ENCODE measurements at regions of chr15 and their contacts with region 1.

Region 1: DNA sequence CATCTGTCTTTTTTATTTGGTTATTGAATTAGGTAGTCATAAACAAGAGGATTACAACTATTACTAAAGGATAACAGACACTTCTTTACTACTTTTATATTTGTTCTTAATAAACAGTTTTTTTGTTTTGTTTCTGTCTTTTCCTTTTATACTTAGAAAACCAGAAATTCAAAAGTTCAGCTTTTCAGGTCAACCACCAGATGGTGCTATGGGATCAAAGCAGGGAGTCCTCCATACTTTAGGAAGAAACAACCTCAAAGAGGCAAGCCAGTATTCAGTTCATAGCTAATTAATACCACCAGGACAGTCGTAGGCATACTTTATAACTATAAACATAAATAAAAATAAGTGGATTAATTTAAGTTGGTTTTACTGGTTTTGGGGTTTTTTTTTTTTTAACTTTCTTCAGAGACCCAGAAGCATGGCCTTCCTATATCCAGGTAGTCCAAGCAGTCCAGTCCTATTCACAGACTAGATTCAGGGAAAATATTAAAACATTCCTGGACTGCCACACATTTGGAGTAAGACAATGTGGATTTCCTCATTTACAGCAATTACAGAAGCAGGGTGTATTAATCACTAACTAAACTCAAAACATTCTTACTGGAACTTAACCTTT is 16.0 kb upstream of the EID1 start:
- DNase-seq: no peak
- ATAC-seq: peak; percentile 87
- H3K4me3 ChIP-seq: no peak overlapping the region
- H3K27ac ChIP-seq: no peak overlapping the region
- H3K4me1 ChIP-seq: no peaks in the 10 kb centered on the region
- H3K27me3 ChIP-seq: no peaks in the 10 kb centered on the region; a peak in 1 of 4 replicates
- CTCF ChIP-seq: peak; percentile 67 to 92 (median 68); a peak in 5 of 6 replicates
- EP300 ChIP-seq: no peak
- POLR2A ChIP-seq: no peak
- RAD21 ChIP-seq: peak; percentile 99

Region 2: GRCh38 chr15:48888836-48889235 is 26.9 kb after region 1 on chr15:
- CTCF ChIA-PET with region 1: interaction called, 10 read pairs
- POLR2A ChIA-PET with region 1: no interaction called
- RAD21 ChIA-PET with region 1: interaction called, 3 read pairs
- SMC1A ChIA-PET with region 1: interaction called, 12 read pairs
- in situ Hi-C with region 1: no loop called
- intact Hi-C with region 1: no loop called
- DNase-seq: no peak
- ATAC-seq: no peak
- H3K4me3 ChIP-seq: no peak overlapping the region
- H3K27ac ChIP-seq: no peak overlapping the region
- H3K4me1 ChIP-seq: no peaks in the 10 kb centered on the region
- H3K27me3 ChIP-seq: no peaks in the 10 kb centered on the region
- CTCF ChIP-seq: no peak
- EP300 ChIP-seq: no peak
- POLR2A ChIP-seq: no peak
- RAD21 ChIP-seq: no peak

Region 3: GRCh38 chr15:48925714-48926223 is 63.8 kb after region 1 on chr15:
- CTCF ChIA-PET with region 1: no interaction called
- POLR2A ChIA-PET with region 1: no interaction called
- RAD21 ChIA-PET with region 1: no interaction called
- SMC1A ChIA-PET with region 1: no interaction called
- in situ Hi-C with region 1: no loop called
- intact Hi-C with region 1: no loop called
- DNase-seq: no peak
- ATAC-seq: no peak
- H3K4me3 ChIP-seq: no peak overlapping the region
- H3K27ac ChIP-seq: no peak overlapping the region
- H3K4me1 ChIP-seq: no peaks in the 10 kb centered on the region
- H3K27me3 ChIP-seq: no peaks in the 10 kb centered on the region
- CTCF ChIP-seq: no peak
- EP300 ChIP-seq: no peak
- POLR2A ChIP-seq: no peak
- RAD21 ChIP-seq: no peak

Region 4: DNA sequence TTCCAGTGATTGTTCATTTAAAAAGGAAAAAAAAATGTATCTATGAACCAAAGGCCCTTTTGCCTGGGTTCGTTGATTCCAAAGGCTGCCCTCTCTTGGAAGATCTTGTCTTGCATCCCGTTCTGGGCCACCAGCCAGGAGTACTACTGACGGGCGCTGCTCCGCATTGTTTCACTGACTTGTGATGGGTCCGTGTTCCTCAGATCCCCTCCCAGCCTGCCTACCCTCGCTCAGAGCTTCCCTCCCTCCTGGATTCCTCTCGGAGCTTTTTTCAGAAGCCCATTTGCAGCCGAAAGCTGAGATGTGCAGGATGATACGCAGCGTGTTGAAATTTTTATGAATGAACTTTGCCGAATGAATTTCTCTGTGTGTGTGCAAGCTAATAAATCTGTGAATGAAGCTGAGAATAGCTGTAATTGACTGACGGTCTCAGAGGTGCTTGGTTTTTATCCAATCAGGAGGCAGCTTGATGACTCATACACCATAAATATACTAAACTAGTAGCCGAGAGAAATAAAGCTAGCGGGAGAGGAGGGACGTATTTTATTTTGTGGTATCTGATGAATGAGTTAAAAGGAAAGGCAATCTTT is 101.7 kb after region 1 on chr15 and contains the start of gene SHC4:
- CTCF ChIA-PET with region 1: interaction called, 129 read pairs
- POLR2A ChIA-PET with region 1: no interaction called
- RAD21 ChIA-PET with region 1: interaction called, 78 read pairs
- SMC1A ChIA-PET with region 1: interaction called, 112 read pairs
- in situ Hi-C with region 1: no loop called
- intact Hi-C with region 1: loop called (anchors 1 kb)
- DNase-seq: no peak
- ATAC-seq: peak; percentile 34
- H3K4me3 ChIP-seq: peak within 1 kb of the TSS; percentile 54
- H3K27ac ChIP-seq: no peak within 1 kb of the TSS
- H3K4me1 ChIP-seq: no peaks in the 10 kb centered on the region; the same call in 1 of the 2 replicates
- H3K27me3 ChIP-seq: peaks cover 0 to 11% of the 10 kb centered on the region in 2 experiments; a peak in 2 of 4 replicates
- CTCF ChIP-seq: 0 out of 6 replicates have a peak, but pooled peaks of 1 of the 3 experiments have one; percentile 5
- EP300 ChIP-seq: no peak
- POLR2A ChIP-seq: no peak
- RAD21 ChIP-seq: no peak
- polyA plus RNA-seq, gene SHC4: 0.04 to 0.08 TPM

Region 5: DNA sequence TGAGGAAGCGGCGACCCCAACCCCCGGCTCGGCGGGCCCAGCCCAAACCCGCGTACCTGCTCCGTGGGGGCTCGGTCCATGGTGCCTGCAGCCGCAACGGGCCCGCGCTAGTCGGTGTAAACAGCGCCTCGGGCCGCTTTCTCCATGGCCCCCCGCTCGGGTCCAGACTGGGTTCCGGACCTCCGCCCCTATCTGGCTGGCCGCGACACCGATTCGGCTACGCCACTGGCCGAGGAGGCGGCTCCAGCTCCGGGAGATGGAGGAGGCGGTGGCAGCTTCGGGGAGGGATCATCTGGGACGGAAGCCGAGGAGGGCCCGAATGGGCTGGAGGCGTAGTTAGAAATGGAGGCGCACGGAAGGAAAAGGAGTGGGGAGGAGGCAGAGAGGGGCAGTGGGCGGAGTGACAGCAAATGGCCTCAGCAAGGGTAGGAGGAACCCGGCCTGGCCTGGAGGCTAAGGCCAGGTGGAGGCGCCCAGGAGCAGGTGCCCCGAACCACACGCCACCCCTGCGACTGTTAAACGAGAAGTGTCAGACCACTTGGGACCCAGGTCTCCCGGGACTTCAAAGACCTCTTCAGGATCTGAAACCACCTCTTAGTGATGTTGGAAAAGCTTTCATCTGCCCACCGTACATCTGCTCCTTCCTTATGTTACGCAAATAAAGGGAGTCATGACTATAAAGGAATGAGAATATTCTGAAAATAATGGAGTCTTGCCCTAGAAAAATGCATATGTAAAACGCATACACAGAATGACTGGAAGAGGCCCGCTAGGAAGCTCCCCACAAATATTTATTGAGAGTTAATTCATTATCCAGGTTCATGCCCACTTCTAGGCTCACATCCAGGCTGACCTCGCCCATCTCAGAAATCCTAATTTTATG is 184.5 kb after region 1 on chr15 and contains the start of gene SECISBP2L:
- CTCF ChIA-PET with region 1: interaction called, 7 read pairs
- POLR2A ChIA-PET with region 1: no interaction called
- RAD21 ChIA-PET with region 1: no interaction called
- SMC1A ChIA-PET with region 1: interaction called, 6 read pairs
- in situ Hi-C with region 1: no loop called
- intact Hi-C with region 1: loop called (anchors 5 kb)
- DNase-seq: peak; percentile 89
- ATAC-seq: peak; percentile 96
- H3K4me3 ChIP-seq: peak within 1 kb of the TSS; percentile 91
- H3K27ac ChIP-seq: peak within 1 kb of the TSS; percentile 91
- H3K4me1 ChIP-seq: peaks cover 7% of the 10 kb centered on the region; the same call in 1 of the 2 replicates
- H3K27me3 ChIP-seq: no peaks in the 10 kb centered on the region
- CTCF ChIP-seq: peak; percentile 55 to 63 (median 55)
- EP300 ChIP-seq: peak in 1 of 2 experiments; percentile 45; a peak in 1 of 4 replicates
- POLR2A ChIP-seq: peak; percentile 94
- RAD21 ChIP-seq: peak; percentile 19; the same call in 1 of the 2 replicates
- polyA plus RNA-seq, gene SECISBP2L: 1.4 to 2.8 TPM

Region 6: GRCh38 chr15:49235446-49236124 is 373.7 kb after region 1 on chr15:
- CTCF ChIA-PET with region 1: interaction called, 27 read pairs
- POLR2A ChIA-PET with region 1: no interaction called
- RAD21 ChIA-PET with region 1: interaction called, 16 read pairs
- SMC1A ChIA-PET with region 1: interaction called, 11 read pairs
- in situ Hi-C with region 1: no loop called
- intact Hi-C with region 1: loop called (anchors 5 kb)
- DNase-seq: peak; percentile 56
- ATAC-seq: peak; percentile 95
- H3K4me3 ChIP-seq: no peak overlapping the region
- H3K27ac ChIP-seq: no peak overlapping the region
- H3K4me1 ChIP-seq: peaks cover 7% of the 10 kb centered on the region; the same call in 1 of the 2 replicates
- H3K27me3 ChIP-seq: no peaks in the 10 kb centered on the region
- CTCF ChIP-seq: peak; percentile 68 to 85 (median 82)
- EP300 ChIP-seq: no peak
- POLR2A ChIP-seq: no peak
- RAD21 ChIP-seq: peak; percentile 84

Region 7: GRCh38 chr15:50145451-50145872 is 1283.5 kb after region 1 on chr15:
- CTCF ChIA-PET with region 1: interaction called, 18 read pairs
- POLR2A ChIA-PET with region 1: no interaction called
- RAD21 ChIA-PET with region 1: interaction called, 3 read pairs
- SMC1A ChIA-PET with region 1: interaction called, 10 read pairs
- in situ Hi-C with region 1: loop called (anchors 5 kb)
- intact Hi-C with region 1: loop called (anchors 5 kb)
- DNase-seq: peak; percentile 16
- ATAC-seq: peak; percentile 75
- H3K4me3 ChIP-seq: no peak overlapping the region
- H3K27ac ChIP-seq: no peak overlapping the region
- H3K4me1 ChIP-seq: no peaks in the 10 kb centered on the region
- H3K27me3 ChIP-seq: no peaks in the 10 kb centered on the region; a peak in 1 of 4 replicates
- CTCF ChIP-seq: peak; percentile 25 to 47 (median 31); a peak in 4 of 6 replicates
- EP300 ChIP-seq: no peak
- POLR2A ChIP-seq: no peak
- RAD21 ChIP-seq: peak; percentile 66